ENCODE measurements at regions of chr7 and their contacts with region 1.

Region 1: DNA sequence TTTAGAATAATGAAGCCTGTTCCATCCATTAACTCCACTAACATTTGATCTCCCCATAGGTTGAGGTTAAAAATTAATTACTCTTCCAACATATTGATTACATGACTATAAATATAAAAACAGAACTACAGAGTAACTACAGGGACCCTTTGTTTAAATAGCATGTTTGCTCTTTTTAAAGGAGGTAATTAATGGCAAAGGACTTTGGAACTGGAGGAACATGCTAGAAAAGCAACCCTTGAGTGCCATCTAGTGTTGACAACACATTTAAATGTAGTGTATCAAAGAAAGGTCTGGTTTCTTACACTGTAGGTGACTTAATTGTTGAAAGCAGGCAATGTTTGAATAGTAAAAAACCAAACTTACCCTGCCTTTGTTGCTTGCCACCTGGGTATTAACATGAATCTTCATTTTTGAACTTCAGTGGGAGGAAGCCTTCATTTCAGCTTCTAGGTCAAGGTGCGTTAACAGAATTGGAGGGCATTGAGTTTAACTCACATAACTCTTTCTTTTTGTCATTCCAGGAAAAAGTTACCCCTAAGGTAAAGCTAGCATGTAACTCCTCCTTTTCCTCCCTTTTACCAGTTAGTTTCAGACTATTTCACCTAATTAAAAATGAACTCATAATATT is 52.6 kb upstream of the CAPZA2 start:
- DNase-seq: no peak
- H3K4me3 ChIP-seq: no peak overlapping the region
- H3K27ac ChIP-seq: no peak overlapping the region
- H3K4me1 ChIP-seq: peaks cover 5 to 14% (median 11%) of the 10 kb centered on the region in 4 donors
- H3K27me3 ChIP-seq: no peaks in the 10 kb centered on the region
- CTCF ChIP-seq: peak; percentile 54 to 61 (median 57)
- EP300 ChIP-seq: no peak
- POLR2A ChIP-seq: no peak

Region 2: DNA sequence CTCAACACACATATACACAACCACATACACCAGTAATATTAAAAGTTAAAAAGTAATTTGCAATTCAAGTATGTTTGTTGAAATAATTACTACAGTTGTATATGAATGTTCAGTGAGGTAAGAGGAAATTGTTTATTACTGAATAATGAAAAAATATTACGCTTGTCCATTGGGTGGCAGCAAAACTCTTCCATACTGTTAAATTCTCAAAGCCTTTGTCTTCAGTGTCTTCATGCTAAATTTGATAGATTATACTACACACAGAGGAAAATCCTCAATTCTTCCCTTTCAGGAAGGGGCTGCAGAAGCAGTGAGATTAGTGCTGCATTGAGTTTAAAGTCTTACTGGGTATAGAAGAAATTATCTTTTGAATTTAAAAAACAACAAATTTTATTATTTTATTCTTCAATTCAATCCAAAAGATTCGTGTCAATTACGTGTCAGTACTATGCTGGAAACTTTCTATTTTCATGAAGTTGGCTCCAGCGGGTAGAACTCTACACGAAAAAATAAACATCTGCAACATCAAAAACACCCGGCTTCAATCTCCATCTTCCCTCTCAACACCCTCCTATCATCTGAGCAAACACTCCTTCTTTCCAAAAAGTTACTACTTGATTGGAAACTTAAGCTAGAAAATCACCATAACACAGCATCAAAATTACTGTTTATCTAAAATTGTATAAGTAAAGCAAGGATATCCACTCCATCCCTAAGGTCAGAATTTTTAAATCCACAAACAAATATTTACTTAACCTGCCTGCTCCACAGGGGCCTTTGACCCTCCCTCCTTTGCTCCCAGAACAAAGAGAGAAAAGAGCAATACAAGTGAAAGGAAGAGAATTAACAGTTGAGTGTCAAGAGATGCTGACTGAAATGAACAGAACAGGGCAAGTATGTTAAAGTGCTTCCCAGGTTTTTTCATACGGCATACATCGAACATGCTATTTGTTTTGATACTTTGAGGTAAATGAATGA is 636.4 kb before region 1 on chr7:
- intact Hi-C with region 1: loop called (anchors 5 kb)
- DNase-seq: no peak
- H3K4me3 ChIP-seq: no peak overlapping the region
- H3K27ac ChIP-seq: no peak overlapping the region
- H3K4me1 ChIP-seq: no peaks in the 10 kb centered on the region
- H3K27me3 ChIP-seq: no peaks in the 10 kb centered on the region
- CTCF ChIP-seq: peak; percentile 53 to 66 (median 54)
- EP300 ChIP-seq: no peak
- POLR2A ChIP-seq: no peak

Region 3: GRCh38 chr7:116258734-116259133 is 551.0 kb before region 1 on chr7:
- intact Hi-C with region 1: loop called (anchors 5 kb)
- DNase-seq: no peak
- H3K4me3 ChIP-seq: no peak overlapping the region
- H3K27ac ChIP-seq: peak overlapping the region; percentile 25 to 56 (median 46)
- H3K4me1 ChIP-seq: peaks cover 5 to 15% (median 10%) of the 10 kb centered on the region in 4 donors
- H3K27me3 ChIP-seq: no peaks in the 10 kb centered on the region
- CTCF ChIP-seq: peak; percentile 81 to 90 (median 84)
- EP300 ChIP-seq: no peak
- POLR2A ChIP-seq: no peak

Region 4: DNA sequence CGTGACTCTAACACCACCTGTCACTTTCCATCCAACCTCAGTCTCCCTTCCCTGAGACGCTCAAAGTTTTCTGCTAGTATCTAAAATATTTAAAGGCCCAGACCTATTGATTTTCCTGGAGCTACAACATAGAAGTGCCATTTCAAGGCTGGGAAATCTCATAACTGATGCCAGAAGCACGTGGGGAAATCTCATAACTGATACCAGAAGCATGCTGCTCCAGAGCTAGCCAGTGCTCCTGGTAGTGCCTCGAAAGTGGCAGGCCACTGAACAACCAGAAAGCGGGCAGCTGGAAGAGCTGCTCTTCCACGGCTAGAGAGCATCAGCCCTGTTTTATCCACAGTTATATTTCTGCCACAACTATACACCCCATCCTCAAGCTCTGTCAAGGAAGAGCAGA is 212.4 kb before region 1 on chr7:
- intact Hi-C with region 1: loop called (anchors 2 kb)
- DNase-seq: no peak
- H3K4me3 ChIP-seq: no peak overlapping the region
- H3K27ac ChIP-seq: no peak overlapping the region
- H3K4me1 ChIP-seq: peaks cover 0 to 6% (median 0%) of the 10 kb centered on the region in 4 donors
- H3K27me3 ChIP-seq: no peaks in the 10 kb centered on the region
- CTCF ChIP-seq: no peak
- EP300 ChIP-seq: no peak
- POLR2A ChIP-seq: no peak

Region 5: DNA sequence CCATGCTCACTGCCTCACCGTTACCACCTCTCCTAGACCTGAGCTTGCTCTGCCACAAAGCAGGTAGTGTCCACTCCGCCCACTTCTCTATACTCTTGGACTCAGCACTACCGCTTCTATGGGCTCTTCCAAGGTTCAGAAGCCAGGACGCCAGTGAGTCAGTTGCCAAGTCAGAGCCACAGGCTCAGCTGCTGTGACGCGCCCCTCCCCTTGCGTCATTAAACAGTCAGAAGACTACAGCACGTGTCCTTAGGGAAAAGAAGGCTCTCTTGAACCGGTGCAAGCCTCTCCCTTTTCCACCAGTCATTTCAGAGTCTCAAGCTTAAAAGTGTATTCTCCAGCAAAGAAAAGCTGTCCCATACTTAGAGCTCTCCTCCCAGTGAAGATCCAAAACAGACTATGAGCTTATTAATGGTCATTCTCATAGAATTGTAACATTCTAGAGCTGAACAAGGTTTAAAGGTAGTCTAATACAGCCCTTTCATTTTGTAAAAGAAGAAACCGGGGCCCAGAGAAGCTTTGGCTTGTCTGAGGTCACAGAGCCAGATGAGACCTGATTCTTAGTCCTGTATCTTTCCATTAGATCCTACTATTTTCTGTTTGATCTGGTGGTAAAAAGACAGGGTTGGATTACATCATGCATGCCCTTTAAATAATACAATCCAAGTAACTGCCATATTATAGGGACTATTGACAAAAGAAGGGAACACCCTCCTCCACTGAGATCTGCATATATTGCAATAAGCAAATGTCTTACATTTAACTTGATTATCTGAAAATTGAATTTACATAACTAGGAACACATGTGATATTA is 178.6 kb before region 1 on chr7:
- intact Hi-C with region 1: no loop called
- DNase-seq: no peak
- H3K4me3 ChIP-seq: no peak overlapping the region
- H3K27ac ChIP-seq: no peak overlapping the region
- H3K4me1 ChIP-seq: peaks cover 12 to 30% (median 22%) of the 10 kb centered on the region in 4 donors
- H3K27me3 ChIP-seq: no peaks in the 10 kb centered on the region
- CTCF ChIP-seq: no peak
- EP300 ChIP-seq: no peak
- POLR2A ChIP-seq: no peak

Region 6: DNA sequence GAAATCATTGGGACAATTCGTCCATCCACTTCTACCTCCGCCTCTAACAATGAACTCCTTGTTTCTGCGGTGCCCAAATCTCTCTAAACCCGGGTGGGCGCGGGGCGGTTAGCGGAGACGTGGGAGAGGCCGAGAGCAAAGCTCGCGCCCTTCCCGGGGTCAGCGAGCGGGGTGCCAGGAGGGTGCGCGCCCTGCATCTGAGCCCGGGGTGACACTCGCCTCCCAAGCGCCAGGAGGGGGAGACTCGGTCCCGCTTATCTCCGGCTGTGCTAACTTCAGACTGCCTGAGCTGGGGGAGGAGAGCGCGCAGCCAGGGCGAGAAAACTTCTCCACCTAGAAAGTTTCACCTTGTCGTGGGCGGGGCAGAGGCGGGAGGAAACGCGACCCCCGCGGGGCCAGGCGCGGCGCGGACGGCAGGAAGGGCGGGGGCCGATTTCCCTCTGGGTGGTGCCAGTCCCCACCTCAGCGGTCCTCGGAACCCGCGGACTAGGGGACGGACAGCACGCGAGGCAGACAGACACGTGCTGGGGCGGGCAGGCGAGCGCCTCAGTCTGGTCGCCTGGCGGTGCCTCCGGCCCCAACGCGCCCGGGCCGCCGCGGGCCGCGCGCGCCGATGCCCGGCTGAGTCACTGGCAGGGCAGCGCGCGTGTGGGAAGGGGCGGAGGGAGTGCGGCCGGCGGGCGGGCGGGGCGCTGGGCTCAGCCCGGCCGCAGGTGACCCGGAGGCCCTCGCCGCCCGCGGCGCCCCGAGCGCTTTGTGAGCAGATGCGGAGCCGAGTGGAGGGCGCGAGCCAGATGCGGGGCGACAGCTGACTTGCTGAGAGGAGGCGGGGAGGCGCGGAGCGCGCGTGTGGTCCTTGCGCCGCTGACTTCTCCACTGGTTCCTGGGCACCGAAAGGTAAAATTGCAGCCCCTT is 137.8 kb before region 1 on chr7 and contains the start of gene MET:
- intact Hi-C with region 1: loop called (anchors 2 kb)
- DNase-seq: no peak
- H3K4me3 ChIP-seq: peak within 1 kb of the TSS; percentile 62 to 79 (median 67)
- H3K27ac ChIP-seq: peak within 1 kb of the TSS; percentile 76 to 79 (median 77)
- H3K4me1 ChIP-seq: peaks cover 11 to 28% (median 22%) of the 10 kb centered on the region in 4 donors
- H3K27me3 ChIP-seq: no peaks in the 10 kb centered on the region
- CTCF ChIP-seq: peak; percentile 47 to 56 (median 52)
- EP300 ChIP-seq: no peak
- POLR2A ChIP-seq: no peak
- total RNA-seq, gene MET: 12.0 to 27.2 (median 15.7) TPM

Measured in esophagus muscularis mucosa (tissue), 4 donors.